Esophagus squamous epithelium (tissue), 5 donors: ENCODE measurements at regions of chr1 and their contacts with region 1.

Region 1: GRCh38 chr1:94237291-94238226 is at the start of gene ARHGAP29:
- DNase-seq: no peak
- H3K4me3 ChIP-seq: peak within 1 kb of the TSS; percentile 60 to 89 (median 76)
- H3K27ac ChIP-seq: peak within 1 kb of the TSS; percentile 80 to 95 (median 86)
- H3K4me1 ChIP-seq: peaks cover 0 to 38% (median 0%) of the 10 kb centered on the region in 3 donors
- H3K27me3 ChIP-seq: peaks cover 0 to 68% (median 2%) of the 10 kb centered on the region in 4 donors
- CTCF ChIP-seq: peak in 2 of 6 experiments; percentile 4 to 34
- POLR2A ChIP-seq: peak in 2 of 4 donors; percentile 80 to 82
- total RNA-seq, gene ARHGAP29: 1.4 to 30.5 (median 5.6) TPM

Region 2: GRCh38 chr1:94045465-94046056 is 192.0 kb before region 1 on chr1:
- intact Hi-C with region 1: loop called (anchors 5 kb)
- DNase-seq: peak; percentile 15
- H3K4me3 ChIP-seq: peak overlapping the region in 1 of 4 donors; percentile 45
- H3K27ac ChIP-seq: peak overlapping the region; percentile 36 to 81 (median 76)
- H3K4me1 ChIP-seq: peaks cover 5 to 27% (median 20%) of the 10 kb centered on the region in 3 donors
- H3K27me3 ChIP-seq: no peaks in the 10 kb centered on the region
- CTCF ChIP-seq: peak; percentile 34 to 82 (median 66)
- POLR2A ChIP-seq: no peak

Region 3: GRCh38 chr1:94296018-94296417 is 58.5 kb after region 1 on chr1:
- intact Hi-C with region 1: no loop called
- DNase-seq: no peak
- H3K4me3 ChIP-seq: no peak overlapping the region
- H3K27ac ChIP-seq: peak overlapping the region in 3 of 4 donors; percentile 26 to 49 (median 42)
- H3K4me1 ChIP-seq: peaks cover 7 to 49% (median 31%) of the 10 kb centered on the region in 3 donors
- H3K27me3 ChIP-seq: no peaks in the 10 kb centered on the region
- CTCF ChIP-seq: no peak
- POLR2A ChIP-seq: no peak

Region 4: DNA sequence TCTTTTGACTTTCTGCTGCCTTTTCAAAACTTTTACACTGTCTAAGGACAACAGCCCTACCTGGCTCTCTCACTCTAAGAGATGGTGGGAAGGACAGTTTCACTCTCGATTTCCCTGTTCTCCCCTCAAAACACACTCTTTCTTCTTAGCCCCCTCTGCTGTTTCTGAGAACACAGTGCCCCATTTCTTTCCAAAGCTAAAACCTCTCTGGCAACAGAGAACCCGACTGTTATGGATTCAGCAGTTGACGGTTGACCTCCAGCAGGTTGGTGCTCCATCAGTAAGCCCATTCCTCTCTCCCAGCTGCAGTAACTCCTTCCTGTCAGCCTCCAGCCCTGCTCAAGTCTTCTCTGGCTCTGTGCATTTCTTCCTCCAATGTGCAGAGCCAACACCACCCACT is 92.4 kb after region 1 on chr1:
- intact Hi-C with region 1: loop called (anchors 10 kb)
- DNase-seq: no peak
- H3K4me3 ChIP-seq: no peak overlapping the region
- H3K27ac ChIP-seq: peak overlapping the region in 2 of 4 donors; percentile 17 to 42
- H3K4me1 ChIP-seq: peaks cover 5 to 47% (median 23%) of the 10 kb centered on the region in 3 donors
- H3K27me3 ChIP-seq: peaks cover 0 to 5% (median 0%) of the 10 kb centered on the region in 4 donors
- CTCF ChIP-seq: peak in 4 of 6 experiments; percentile 19 to 34 (median 29)
- POLR2A ChIP-seq: no peak